ENCODE measurements at regions of chr5 and their contacts with region 1.

Region 1: GRCh38 chr5:81105261-81105877 is 127.8 kb upstream of the CKMT2 start:
- DNase-seq: no peak
- ATAC-seq: no peak
- H3K4me3 Mint-ChIP-seq: no peak overlapping the region
- H3K27ac Mint-ChIP-seq: no peak overlapping the region
- H3K4me1 Mint-ChIP-seq: peaks cover 25% of the 10 kb centered on the region
- H3K27me3 Mint-ChIP-seq: peaks cover 5% of the 10 kb centered on the region

Region 2: DNA sequence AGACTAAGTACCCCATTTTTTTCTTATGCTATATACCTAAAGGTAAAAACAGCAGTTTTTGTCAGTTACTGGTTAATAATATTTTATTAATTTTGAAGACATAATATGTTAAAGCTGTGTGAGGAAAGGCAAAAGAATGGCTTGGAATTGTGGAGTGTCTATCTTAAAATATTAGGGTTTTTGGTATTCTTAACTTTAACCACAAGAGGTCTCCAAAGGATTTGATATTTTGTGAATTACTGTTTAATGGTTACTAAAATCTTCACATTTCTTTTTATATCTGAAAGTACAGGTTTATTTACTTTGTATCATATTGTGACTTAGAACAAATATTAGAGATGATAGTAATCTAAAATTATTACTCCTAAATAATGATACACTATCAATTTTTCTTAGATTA is 418.6 kb before region 1 on chr5:
- CTCF ChIA-PET with region 1: interaction called, 16 read pairs
- DNase-seq: no peak
- ATAC-seq: no peak
- H3K4me3 Mint-ChIP-seq: no peak overlapping the region
- H3K27ac Mint-ChIP-seq: no peak overlapping the region
- H3K4me1 Mint-ChIP-seq: peaks cover 24% of the 10 kb centered on the region
- H3K27me3 Mint-ChIP-seq: no peaks in the 10 kb centered on the region

Region 3: DNA sequence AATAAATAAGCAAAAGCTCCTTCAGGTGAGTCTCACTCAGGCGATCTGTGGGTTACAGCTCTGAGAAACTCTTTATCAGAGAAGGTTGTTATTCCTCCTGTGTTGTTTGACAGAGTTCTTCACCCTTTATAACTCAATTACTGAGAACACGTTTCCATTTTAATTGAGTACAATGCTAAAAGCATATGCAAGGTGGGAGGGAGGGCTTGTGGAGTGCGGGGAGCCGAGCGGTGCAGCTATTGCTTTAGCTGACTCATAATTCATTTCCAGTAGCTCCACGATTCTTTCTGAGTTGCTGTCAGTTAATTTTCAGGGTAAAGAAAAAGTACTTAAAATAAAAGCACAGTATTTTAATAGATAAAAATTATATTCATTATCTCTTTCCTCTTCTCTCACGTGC is 23.0 kb after region 1 on chr5:
- CTCF ChIA-PET with region 1: no interaction called
- DNase-seq: no peak
- ATAC-seq: no peak
- H3K4me3 Mint-ChIP-seq: no peak overlapping the region
- H3K27ac Mint-ChIP-seq: no peak overlapping the region
- H3K4me1 Mint-ChIP-seq: no peaks in the 10 kb centered on the region
- H3K27me3 Mint-ChIP-seq: no peaks in the 10 kb centered on the region

Region 4: GRCh38 chr5:81154725-81155124 is 49.4 kb after region 1 on chr5:
- CTCF ChIA-PET with region 1: no interaction called
- DNase-seq: no peak
- ATAC-seq: no peak
- H3K4me3 Mint-ChIP-seq: no peak overlapping the region
- H3K27ac Mint-ChIP-seq: no peak overlapping the region
- H3K4me1 Mint-ChIP-seq: no peaks in the 10 kb centered on the region
- H3K27me3 Mint-ChIP-seq: no peaks in the 10 kb centered on the region